Transverse colon (tissue), 4 donors: ENCODE measurements at regions of chr19 and their contacts with region 1.

Region 1: GRCh38 chr19:46661020-46661731 is at the start of gene DACT3:
- DNase-seq: peak; percentile 100
- H3K4me3 ChIP-seq: peak within 1 kb of the TSS; percentile 44 to 58 (median 56)
- H3K27ac ChIP-seq: peak within 1 kb of the TSS; percentile 83 to 94 (median 88)
- H3K4me1 ChIP-seq: peaks cover 4 to 34% (median 16%) of the 10 kb centered on the region in 4 donors
- H3K27me3 ChIP-seq: peaks cover 30% of the 10 kb centered on the region
- CTCF ChIP-seq: no peak
- EP300 ChIP-seq: no peak
- POLR2A ChIP-seq: peak; percentile 25
- total RNA-seq, gene DACT3: 5.3 to 27.1 (median 7.5) TPM

Region 2: DNA sequence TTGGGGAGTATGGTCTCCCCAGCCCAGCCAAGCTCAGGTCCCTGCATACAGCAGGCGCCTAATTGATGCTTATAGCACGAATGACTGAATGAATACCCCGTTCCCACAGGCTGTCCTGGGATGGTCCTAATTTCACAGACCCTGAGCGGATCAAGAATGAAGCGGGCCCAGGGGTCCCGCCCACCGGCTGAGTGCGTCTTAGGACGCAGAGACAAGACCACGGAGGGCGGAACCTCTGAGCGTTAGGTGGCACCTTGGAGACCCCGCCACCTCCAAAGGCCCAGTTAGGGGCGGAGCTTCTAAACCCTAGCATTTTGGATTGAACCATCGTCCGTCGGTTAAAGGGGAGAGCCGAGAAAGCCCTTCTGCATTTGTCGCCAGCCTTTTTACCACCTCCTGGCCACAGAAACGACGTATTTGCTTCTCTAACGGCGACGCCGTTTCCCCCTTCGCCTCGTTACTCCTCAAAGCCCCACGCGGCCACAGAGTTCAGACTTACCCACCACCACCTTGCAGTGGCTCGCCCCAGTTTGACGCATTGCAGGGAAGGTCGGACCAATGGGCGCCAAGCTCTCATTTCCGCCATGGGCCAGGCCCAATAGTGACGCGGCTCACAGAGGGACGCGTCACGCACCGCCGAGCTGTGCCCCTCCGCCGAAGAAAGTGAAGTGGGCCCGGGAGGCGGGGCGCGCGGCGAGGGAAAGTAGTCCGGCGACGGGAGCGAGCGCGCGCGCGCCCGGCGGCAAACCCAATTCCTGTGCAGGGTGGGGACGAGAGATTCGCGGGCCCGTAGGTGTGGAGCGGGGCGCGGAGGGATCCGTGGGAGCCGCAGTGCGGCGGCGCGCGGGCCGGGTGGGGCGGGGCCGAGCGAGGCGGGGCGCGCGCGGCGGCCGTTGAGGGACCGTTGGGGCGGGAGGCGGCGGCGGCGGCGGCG is 60.5 kb before region 1 on chr19:
- in situ Hi-C with region 1: no loop called
- intact Hi-C with region 1: loop called (anchors 5 kb)
- DNase-seq: peak; percentile 98
- H3K4me3 ChIP-seq: peak overlapping the region; percentile 71 to 100 (median 100)
- H3K27ac ChIP-seq: peak overlapping the region; percentile 97 to 100 (median 98)
- H3K4me1 ChIP-seq: peaks cover 19 to 42% (median 29%) of the 10 kb centered on the region in 4 donors
- H3K27me3 ChIP-seq: no peaks in the 10 kb centered on the region
- CTCF ChIP-seq: peak in 2 of 5 experiments; percentile 9 to 14
- EP300 ChIP-seq: no peak
- POLR2A ChIP-seq: peak; percentile 84

Region 3: DNA sequence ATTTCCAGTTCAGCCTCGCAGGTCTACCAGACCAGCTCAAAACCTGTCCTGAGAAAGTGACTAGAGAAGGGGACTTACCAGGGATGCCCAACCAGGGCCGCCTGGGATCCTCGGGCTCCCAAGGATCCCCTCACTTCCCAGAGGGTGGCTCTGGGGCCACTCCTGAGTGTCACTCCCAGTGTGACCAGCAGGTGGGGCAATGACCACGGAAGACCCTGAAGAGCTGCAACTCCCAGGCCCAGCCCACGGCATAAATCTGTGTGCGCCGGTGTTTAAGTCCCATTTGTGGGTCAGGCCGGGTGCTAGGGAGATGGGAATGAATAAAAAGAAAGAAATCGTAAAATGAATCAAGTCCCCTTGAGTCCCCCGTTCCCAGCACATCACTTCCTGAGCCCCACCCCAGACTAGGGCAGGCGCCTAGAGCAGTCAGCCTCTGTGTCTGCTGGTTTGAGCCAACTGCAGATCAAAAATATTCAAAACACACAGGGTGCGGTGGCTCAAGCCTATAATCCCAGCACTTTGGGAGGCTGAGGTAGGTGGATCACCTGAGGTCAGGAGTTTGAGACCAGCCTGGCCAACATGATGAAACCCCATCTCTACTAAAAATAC is 47.0 kb before region 1 on chr19:
- in situ Hi-C with region 1: loop called in 3 of 4 experiments (anchors 5 kb)
- intact Hi-C with region 1: loop called (anchors 2 kb)
- DNase-seq: peak; percentile 88
- H3K4me3 ChIP-seq: no peak overlapping the region
- H3K27ac ChIP-seq: no peak overlapping the region
- H3K4me1 ChIP-seq: peaks cover 0 to 42% (median 4%) of the 10 kb centered on the region in 4 donors
- H3K27me3 ChIP-seq: no peaks in the 10 kb centered on the region
- CTCF ChIP-seq: peak; percentile 86 to 91 (median 89)
- EP300 ChIP-seq: no peak
- POLR2A ChIP-seq: no peak

Region 4: DNA sequence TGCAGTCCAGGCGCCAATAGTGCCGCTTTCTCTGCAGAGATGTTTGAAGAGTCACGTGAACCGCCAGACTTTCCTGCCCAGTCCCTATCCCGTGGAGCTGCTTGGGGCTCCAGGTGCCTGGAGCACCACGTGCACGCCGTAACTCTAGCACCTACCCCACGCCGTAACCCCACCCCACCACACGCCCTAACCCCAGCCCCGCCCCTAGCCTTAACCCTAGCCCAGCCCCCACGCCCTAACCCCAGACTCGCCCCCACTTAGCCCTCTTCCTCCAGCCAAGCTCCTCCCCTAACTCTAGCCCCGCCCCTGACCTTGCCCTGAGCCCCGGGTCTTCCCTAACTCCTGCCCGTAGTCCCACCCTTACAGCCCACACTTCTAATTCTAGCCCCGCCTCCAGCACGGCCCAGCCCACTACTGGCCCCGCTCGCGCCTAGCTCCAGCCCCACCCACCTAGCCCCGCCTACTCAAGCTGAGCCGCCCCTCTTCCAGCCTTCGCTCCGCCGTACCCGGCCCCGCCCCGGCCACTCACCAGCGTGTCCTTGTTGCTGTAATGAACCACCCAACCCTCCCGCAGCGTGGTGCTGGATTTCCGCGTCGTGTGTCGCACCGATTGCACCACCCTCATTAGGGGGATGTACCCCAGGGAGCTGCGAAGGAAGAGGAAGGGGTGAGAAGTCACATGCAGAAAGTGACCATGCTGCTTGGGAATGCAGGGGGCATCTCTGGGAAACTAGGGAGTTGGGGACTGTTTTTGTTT is 36.2 kb after region 1 on chr19:
- in situ Hi-C with region 1: no loop called
- intact Hi-C with region 1: no loop called
- DNase-seq: peak; percentile 96
- H3K4me3 ChIP-seq: no peak overlapping the region
- H3K27ac ChIP-seq: peak overlapping the region in 3 of 4 donors; percentile 9 to 27 (median 22)
- H3K4me1 ChIP-seq: peaks cover 0 to 10% (median 6%) of the 10 kb centered on the region in 4 donors
- H3K27me3 ChIP-seq: no peaks in the 10 kb centered on the region
- CTCF ChIP-seq: no peak
- EP300 ChIP-seq: no peak
- POLR2A ChIP-seq: no peak